Activated CD4-positive, alpha-beta T cell treated with anti-CD3 and anti-CD28 coated beads, Interleukin-2, amount 10 ng/mL, durations not matched to agents 7 days and 5 days (primary cell): ENCODE measurements at regions of chr1 and their contacts with region 1.

Region 1: GRCh38 chr1:100448366-100448765 is 89.6 kb upstream of the GPR88 start:
- DNase-seq: no peak
- H3K4me3 Mint-ChIP-seq: no peak overlapping the region
- H3K27ac Mint-ChIP-seq: peak overlapping the region; percentile 2
- H3K4me1 Mint-ChIP-seq: peaks cover 92% of the 10 kb centered on the region
- H3K27me3 Mint-ChIP-seq: no peaks in the 10 kb centered on the region

Region 2: GRCh38 chr1:100459358-100460114 is 11.2 kb after region 1 on chr1:
- CTCF ChIA-PET with region 1: interaction called, 11 read pairs
- POLR2A ChIA-PET with region 1: no interaction called
- DNase-seq: peak; percentile 74
- H3K4me3 Mint-ChIP-seq: no peak overlapping the region
- H3K27ac Mint-ChIP-seq: peak overlapping the region; percentile 73
- H3K4me1 Mint-ChIP-seq: peaks cover 46% of the 10 kb centered on the region
- H3K27me3 Mint-ChIP-seq: no peaks in the 10 kb centered on the region